ENCODE measurements at regions of chr4 and their contacts with region 1.

Region 1: GRCh38 chr4:38078590-38079421 is 118.6 kb downstream of the PTTG2 start:
- DNase-seq: no peak
- ATAC-seq: peak; percentile 65
- H3K4me3 ChIP-seq: peak overlapping the region; percentile 7; the same call in 1 of the 2 replicates
- H3K27ac ChIP-seq: peak overlapping the region; percentile 87
- H3K4me1 ChIP-seq: peaks cover 47% of the 10 kb centered on the region
- H3K27me3 ChIP-seq: no peaks in the 10 kb centered on the region
- CTCF ChIP-seq: no peak
- EP300 ChIP-seq: no peak
- POLR2A ChIP-seq: no peak
- RAD21 ChIP-seq: no peak

Region 2: DNA sequence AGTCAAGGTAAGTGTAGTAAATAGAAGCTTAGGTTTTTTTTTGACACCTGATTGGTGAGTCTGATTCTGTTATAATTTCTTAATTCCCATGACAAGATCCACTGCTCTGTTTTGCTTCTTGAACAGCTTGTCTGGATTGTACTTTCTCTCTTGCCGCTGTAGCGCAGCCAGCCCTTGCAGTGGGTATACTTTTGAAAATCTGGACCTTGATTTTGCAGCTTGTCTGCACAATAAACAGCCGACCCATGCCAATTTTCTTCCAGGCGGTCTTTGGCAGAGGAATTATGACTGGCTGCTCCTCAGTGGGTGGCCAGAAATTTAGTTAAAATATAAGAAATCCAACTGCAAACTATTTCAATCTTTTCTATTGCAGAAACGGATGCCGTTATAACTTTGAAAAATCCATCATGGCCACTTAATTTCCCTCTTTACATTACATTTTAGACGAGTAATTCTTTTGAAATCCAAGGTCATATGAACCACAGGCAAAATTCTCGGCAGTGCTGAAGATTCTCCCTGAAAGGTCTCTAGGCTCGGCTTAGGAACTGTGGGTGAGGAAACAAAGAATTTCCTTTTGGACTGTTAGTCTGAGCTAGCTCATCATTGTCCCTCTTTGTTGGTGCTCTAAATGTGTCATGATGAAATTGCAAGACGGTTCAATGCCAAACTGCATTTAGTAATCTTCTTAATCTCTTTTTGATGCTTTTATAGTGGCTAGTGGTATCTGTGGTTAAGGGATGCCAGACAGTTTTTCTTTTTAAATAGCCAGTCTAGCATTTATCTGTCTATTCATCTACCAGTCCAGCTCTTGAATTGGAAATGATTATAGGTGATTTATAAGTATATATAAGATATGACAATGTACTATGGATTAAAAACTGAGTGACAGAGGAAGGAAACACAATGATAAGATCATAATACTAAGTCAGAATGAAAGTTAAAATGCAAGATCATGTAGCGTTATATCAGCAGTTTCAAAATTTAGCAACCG is 150.1 kb before region 1 on chr4:
- CTCF ChIA-PET with region 1: no interaction called
- POLR2A ChIA-PET with region 1: no interaction called
- RAD21 ChIA-PET with region 1: no interaction called
- SMC1A ChIA-PET with region 1: no interaction called
- in situ Hi-C with region 1: no loop called
- intact Hi-C with region 1: no loop called
- DNase-seq: no peak
- ATAC-seq: no peak
- H3K4me3 ChIP-seq: no peak overlapping the region
- H3K27ac ChIP-seq: no peak overlapping the region
- H3K4me1 ChIP-seq: no peaks in the 10 kb centered on the region
- H3K27me3 ChIP-seq: no peaks in the 10 kb centered on the region
- CTCF ChIP-seq: no peak
- EP300 ChIP-seq: no peak
- POLR2A ChIP-seq: no peak
- RAD21 ChIP-seq: no peak

Region 3: GRCh38 chr4:38062088-38062893 is 16.5 kb before region 1 on chr4:
- CTCF ChIA-PET with region 1: interaction called, 8 read pairs
- POLR2A ChIA-PET with region 1: interaction called, 10 read pairs
- RAD21 ChIA-PET with region 1: interaction called, 4 read pairs
- SMC1A ChIA-PET with region 1: interaction called, 3 read pairs
- in situ Hi-C with region 1: no loop called
- intact Hi-C with region 1: no loop called
- DNase-seq: no peak
- ATAC-seq: peak; percentile 93
- H3K4me3 ChIP-seq: no peak overlapping the region
- H3K27ac ChIP-seq: peak overlapping the region; percentile 6
- H3K4me1 ChIP-seq: peaks cover 3% of the 10 kb centered on the region; the same call in 1 of the 2 replicates
- H3K27me3 ChIP-seq: no peaks in the 10 kb centered on the region
- CTCF ChIP-seq: peak; percentile 67 to 85 (median 80)
- EP300 ChIP-seq: no peak
- POLR2A ChIP-seq: no peak
- RAD21 ChIP-seq: peak; percentile 95

Region 4: DNA sequence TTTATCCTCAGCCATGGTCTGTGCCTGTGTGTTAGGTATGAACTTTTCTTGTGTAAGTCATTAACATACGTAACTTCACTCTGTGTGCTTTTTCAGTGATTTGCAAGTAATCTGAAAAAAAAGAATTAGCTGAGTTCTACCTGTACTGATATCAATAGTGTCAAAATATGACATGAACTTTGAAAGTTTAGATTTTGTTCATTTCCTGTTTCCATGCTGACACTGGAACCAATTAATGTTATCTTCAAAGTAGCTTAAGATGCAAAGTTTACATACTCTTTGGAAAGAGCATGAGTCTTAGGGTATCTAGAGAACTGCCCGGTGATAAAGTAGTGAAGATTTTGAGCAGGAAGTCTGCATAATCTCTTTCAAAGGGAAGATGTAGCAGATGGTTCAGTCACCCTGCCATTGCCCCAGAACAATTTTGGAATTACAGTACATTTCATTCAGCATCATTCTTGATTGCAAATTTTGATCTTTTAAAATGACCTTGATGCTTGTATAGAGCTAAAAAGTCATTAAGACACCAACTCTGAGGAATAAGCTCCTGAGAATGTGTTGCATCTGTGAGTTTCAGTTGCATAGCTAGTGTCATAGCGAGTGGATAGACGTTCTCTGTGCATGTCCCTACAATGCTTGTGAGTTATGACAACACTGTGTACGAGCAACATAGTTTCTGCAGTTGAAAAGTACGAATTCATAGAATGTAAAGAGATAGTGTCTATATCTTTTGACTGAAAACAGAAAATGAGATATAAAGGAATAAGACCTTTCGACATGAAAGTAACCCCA is 11.8 kb after region 1 on chr4:
- CTCF ChIA-PET with region 1: interaction called, 11 read pairs
- POLR2A ChIA-PET with region 1: interaction called, 4 read pairs
- RAD21 ChIA-PET with region 1: interaction called, 5 read pairs
- SMC1A ChIA-PET with region 1: interaction called, 12 read pairs
- in situ Hi-C with region 1: no loop called
- intact Hi-C with region 1: no loop called
- DNase-seq: no peak
- ATAC-seq: no peak
- H3K4me3 ChIP-seq: no peak overlapping the region
- H3K27ac ChIP-seq: peak overlapping the region; percentile 33; the same call in 1 of the 2 replicates
- H3K4me1 ChIP-seq: peaks cover 10% of the 10 kb centered on the region
- H3K27me3 ChIP-seq: no peaks in the 10 kb centered on the region
- CTCF ChIP-seq: no peak
- EP300 ChIP-seq: no peak
- POLR2A ChIP-seq: no peak
- RAD21 ChIP-seq: no peak

Region 5: DNA sequence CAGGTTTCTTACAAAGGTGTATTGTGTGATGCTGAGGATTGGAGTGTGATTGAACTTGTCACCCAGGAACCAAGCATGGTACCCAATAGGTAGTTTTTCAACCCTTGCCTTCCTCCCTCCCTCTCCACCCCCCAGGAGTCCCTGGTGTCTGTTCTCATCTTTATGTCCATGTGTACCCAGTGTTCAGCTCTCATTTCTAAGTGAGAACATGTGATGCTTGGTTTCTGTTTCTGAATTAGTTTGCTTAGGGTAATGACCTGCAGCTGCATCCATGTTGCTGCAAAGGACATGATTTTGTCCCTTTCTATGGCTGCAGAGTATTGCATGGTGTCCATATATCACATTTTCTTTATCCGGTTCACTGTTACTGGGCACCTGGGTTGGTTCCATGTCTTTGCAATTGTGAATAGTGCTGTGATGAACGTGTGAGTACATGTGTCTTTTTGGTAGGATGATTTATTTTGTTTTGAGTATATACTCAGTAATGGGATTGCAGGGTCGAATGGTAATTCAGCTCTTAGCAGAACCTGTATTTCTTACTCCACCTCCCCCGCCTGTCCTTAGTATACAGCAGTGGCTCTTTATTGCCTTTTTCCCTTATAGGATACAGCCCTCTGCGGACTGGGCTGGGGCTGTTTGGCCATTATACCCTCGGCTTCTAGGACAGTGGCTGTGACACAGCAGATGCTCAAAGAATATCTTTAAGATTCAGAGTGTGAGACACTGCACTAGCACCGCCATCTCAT is 26.8 kb after region 1 on chr4:
- CTCF ChIA-PET with region 1: interaction called, 6 read pairs
- POLR2A ChIA-PET with region 1: interaction called, 4 read pairs
- RAD21 ChIA-PET with region 1: interaction called, 15 read pairs
- SMC1A ChIA-PET with region 1: interaction called, 7 read pairs
- in situ Hi-C with region 1: no loop called
- intact Hi-C with region 1: no loop called
- DNase-seq: peak; percentile 45
- ATAC-seq: peak; percentile 92
- H3K4me3 ChIP-seq: no peak overlapping the region
- H3K27ac ChIP-seq: peak overlapping the region; percentile 30
- H3K4me1 ChIP-seq: peaks cover 15% of the 10 kb centered on the region
- H3K27me3 ChIP-seq: no peaks in the 10 kb centered on the region
- CTCF ChIP-seq: no peak
- EP300 ChIP-seq: peak in 1 of 2 experiments; percentile 23; a peak in 1 of 4 replicates
- POLR2A ChIP-seq: no peak
- RAD21 ChIP-seq: peak; percentile 19; the same call in 1 of the 2 replicates

Region 6: DNA sequence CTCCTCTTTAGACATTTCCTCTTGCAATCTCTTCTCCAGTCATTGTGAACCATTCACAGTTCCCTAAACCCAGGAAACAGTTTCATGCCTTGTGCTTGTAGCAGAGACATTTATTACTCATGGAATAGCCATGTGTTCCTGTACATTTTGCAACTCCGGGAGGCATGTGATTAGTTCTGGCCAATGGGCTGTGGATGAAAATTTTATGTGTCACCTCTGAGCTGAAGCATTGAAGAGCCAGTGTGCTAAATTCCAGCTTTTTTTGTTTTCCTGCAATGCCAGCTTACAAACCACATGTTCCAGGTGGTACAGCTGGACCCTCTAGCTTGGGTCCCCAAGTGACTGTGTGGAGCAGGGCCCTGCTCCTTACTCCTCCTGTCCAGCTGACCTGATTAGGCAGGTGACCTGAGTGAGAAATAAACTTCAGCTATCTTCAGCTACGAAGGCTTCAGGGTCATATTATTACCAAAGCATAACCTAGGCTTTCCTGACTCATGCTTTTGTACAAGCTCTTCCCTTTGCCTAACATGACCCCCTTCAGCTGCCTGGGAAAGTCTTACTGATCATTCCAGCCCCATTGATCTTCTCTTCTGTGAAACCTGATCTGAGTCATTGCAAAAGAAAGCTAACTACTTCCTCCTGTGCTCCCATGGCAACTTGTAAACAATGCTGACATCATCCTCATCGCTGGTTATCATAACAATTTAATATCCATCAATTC is 81.8 kb after region 1 on chr4:
- CTCF ChIA-PET with region 1: no interaction called
- POLR2A ChIA-PET with region 1: no interaction called
- RAD21 ChIA-PET with region 1: interaction called, 10 read pairs
- SMC1A ChIA-PET with region 1: interaction called, 13 read pairs
- in situ Hi-C with region 1: no loop called
- intact Hi-C with region 1: no loop called
- DNase-seq: peak; percentile 69
- ATAC-seq: peak; percentile 91
- H3K4me3 ChIP-seq: no peak overlapping the region
- H3K27ac ChIP-seq: peak overlapping the region; percentile 57
- H3K4me1 ChIP-seq: peaks cover 10% of the 10 kb centered on the region
- H3K27me3 ChIP-seq: no peaks in the 10 kb centered on the region
- CTCF ChIP-seq: no peak
- EP300 ChIP-seq: peak; percentile 87 to 96; a peak in 3 of 4 replicates
- POLR2A ChIP-seq: no peak
- RAD21 ChIP-seq: peak; percentile 16; the same call in 1 of the 2 replicates

Region 7: DNA sequence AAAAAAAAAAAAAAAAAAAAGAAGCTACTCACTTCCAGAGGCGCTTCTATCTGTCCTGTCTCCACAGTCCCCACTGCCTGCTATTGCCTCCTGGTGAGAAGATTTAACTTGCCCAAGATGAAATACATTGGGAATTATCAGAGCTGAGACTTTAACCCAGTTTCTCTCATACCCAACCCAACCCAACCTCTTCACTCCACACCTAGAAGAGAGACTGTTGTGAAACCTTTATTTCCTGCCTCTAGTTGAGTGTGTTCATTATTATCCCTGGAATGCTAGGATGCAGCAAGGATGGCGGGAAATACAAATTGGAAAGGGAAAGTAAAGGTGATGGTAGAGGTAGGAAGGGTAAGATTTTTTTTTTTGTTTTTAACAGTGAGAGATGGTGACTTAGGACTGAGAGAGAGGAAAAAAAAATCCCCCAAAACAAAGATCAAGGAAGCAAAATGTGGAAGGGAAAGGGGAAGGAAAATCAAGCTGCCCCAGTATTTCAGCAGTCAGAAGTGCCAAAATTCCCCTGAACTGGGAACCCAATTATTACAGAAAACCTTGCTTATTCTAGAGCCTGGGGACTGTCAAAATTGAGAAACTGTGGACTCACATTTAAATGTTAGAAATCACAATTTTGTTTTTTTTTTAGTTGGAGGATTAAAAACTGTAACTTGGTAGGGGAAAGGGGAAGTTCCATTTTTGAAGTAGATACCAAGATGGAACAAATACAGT is 134.4 kb after region 1 on chr4:
- CTCF ChIA-PET with region 1: no interaction called
- POLR2A ChIA-PET with region 1: no interaction called
- RAD21 ChIA-PET with region 1: no interaction called
- SMC1A ChIA-PET with region 1: no interaction called
- in situ Hi-C with region 1: no loop called
- intact Hi-C with region 1: no loop called
- DNase-seq: no peak
- ATAC-seq: no peak
- H3K4me3 ChIP-seq: no peak overlapping the region
- H3K27ac ChIP-seq: no peak overlapping the region
- H3K4me1 ChIP-seq: no peaks in the 10 kb centered on the region
- H3K27me3 ChIP-seq: no peaks in the 10 kb centered on the region
- CTCF ChIP-seq: no peak
- EP300 ChIP-seq: no peak
- POLR2A ChIP-seq: no peak
- RAD21 ChIP-seq: no peak

Region 8: DNA sequence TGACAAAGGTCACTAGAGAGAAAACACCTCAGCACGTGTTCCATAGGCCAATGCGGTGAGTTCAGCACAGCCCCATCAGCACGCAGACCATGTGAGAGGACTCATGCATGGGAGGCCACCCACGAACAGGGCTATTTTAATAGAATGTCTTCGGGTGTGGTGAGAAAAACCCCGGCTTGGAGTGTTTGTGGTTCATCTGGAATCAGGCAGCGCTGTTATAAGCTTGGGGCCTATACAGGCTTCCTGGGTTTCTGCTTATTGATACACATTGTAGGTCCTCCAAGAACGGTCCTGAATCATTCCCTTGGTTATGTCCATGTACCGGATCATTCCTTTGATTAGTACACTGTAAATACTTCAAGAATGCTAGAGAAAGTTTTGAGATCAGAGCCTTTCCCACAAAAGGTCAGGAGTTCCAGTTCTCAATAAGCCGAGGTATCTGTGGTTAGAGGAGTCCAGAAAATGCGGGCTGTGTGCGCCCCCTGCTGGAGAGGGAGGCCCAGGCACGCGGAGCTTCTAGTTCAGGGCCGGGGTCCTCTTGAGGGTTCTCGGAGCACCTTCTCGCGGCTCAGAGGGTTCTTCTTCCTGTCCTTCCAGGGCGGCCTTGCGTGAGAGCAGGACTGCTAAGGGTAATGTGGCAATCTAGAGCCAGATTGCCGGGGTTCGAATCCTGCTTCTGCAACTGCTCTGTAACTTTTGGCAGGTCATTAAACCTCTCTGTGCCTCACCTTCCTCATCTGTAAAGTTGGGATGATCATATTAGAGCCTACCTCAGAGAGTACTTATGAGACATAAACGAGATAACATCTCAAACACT is 652.2 kb after region 1 on chr4:
- CTCF ChIA-PET with region 1: no interaction called
- POLR2A ChIA-PET with region 1: no interaction called
- RAD21 ChIA-PET with region 1: no interaction called
- SMC1A ChIA-PET with region 1: no interaction called
- in situ Hi-C with region 1: loop called (anchors 5 kb)
- intact Hi-C with region 1: loop called (anchors 5 kb)
- DNase-seq: peak; percentile 87
- ATAC-seq: peak; percentile 97
- H3K4me3 ChIP-seq: no peak overlapping the region
- H3K27ac ChIP-seq: peak overlapping the region; percentile 57
- H3K4me1 ChIP-seq: peaks cover 16% of the 10 kb centered on the region
- H3K27me3 ChIP-seq: no peaks in the 10 kb centered on the region; a peak in 1 of 4 replicates
- CTCF ChIP-seq: peak; percentile 69 to 96 (median 89)
- EP300 ChIP-seq: peak; percentile 75 to 91; a peak in 3 of 4 replicates
- POLR2A ChIP-seq: no peak
- RAD21 ChIP-seq: peak; percentile 97

Measured in GM12878 (cell line).